Pancreas (tissue), 10 donors: ENCODE measurements at regions of chr1 and their contacts with region 1.

Region 1: GRCh38 chr1:26233903-26234643 is at the start of gene CEP85:
- DNase-seq: peak; percentile 97 to 100 (median 99)
- ATAC-seq: peak; percentile 93 to 99 (median 98)
- H3K4me3 ChIP-seq: peak within 1 kb of the TSS; percentile 50 to 82 (median 62)
- H3K27ac ChIP-seq: peak within 1 kb of the TSS; percentile 75 to 88 (median 81)
- H3K4me1 ChIP-seq: peaks cover 0 to 7% (median 0%) of the 10 kb centered on the region in 3 donors
- H3K27me3 ChIP-seq: no peaks in the 10 kb centered on the region
- CTCF ChIP-seq: peak; percentile 74 to 88 (median 83)
- total RNA-seq, gene CEP85: 2.7 to 6.6 (median 3.7) TPM

Region 2: DNA sequence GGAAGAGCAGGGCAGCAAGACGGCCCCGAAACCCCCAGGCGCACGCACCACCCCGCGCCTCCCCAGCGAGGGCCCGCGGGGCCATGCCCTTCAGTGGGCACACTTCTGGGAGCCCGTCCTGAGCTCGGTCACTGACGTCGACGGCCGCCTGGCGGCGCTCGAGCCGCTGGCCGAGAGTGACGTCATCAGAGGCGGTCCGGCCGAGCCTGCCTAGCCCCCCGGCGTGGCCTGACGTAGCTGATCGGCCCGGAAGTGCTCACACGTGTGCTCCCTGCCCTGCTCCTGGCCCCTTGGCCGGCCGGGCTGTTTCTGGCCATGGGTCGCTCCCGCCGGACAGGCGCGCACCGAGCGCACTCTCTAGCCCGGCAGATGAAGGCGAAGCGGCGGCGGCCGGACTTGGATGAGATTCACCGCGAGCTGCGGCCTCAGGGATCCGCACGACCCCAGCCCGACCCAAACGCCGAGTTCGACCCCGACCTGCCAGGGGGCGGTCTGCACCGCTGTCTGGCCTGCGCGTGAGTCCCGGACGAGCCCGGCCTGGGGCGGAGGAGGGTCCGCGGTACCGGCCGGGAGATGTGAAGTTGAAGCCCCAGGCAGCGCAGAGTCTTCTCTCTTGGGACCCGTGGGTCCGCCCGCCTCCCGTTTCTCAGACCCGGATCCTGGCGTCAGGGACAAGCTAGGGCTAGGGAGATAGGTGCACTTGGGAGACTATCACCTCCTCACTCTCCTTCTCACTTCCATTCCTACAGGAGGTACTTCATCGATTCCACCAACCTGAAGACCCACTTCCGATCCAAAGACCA is 64.2 kb before region 1 on chr1 and contains the start of gene ZNF593:
- intact Hi-C with region 1: loop called in 1 of 3 experiments (anchors 10 kb)
- DNase-seq: peak; percentile 88 to 97 (median 94)
- ATAC-seq: peak; percentile 94 to 97 (median 96)
- H3K4me3 ChIP-seq: peak within 1 kb of the TSS; percentile 63 to 98 (median 94)
- H3K27ac ChIP-seq: peak within 1 kb of the TSS; percentile 67 to 85 (median 74)
- H3K4me1 ChIP-seq: peaks cover 0 to 9% (median 9%) of the 10 kb centered on the region in 3 donors
- H3K27me3 ChIP-seq: no peaks in the 10 kb centered on the region
- CTCF ChIP-seq: peak; percentile 69 to 91 (median 84)
- total RNA-seq, gene ZNF593: 18.4 to 36.7 (median 22.1) TPM

Region 3: GRCh38 chr1:26203642-26204318 is 30.3 kb before region 1 on chr1:
- intact Hi-C with region 1: no loop called
- DNase-seq: no peak
- ATAC-seq: no peak
- H3K4me3 ChIP-seq: no peak overlapping the region
- H3K27ac ChIP-seq: no peak overlapping the region
- H3K4me1 ChIP-seq: no peaks in the 10 kb centered on the region
- H3K27me3 ChIP-seq: no peaks in the 10 kb centered on the region
- CTCF ChIP-seq: no peak

Region 4: DNA sequence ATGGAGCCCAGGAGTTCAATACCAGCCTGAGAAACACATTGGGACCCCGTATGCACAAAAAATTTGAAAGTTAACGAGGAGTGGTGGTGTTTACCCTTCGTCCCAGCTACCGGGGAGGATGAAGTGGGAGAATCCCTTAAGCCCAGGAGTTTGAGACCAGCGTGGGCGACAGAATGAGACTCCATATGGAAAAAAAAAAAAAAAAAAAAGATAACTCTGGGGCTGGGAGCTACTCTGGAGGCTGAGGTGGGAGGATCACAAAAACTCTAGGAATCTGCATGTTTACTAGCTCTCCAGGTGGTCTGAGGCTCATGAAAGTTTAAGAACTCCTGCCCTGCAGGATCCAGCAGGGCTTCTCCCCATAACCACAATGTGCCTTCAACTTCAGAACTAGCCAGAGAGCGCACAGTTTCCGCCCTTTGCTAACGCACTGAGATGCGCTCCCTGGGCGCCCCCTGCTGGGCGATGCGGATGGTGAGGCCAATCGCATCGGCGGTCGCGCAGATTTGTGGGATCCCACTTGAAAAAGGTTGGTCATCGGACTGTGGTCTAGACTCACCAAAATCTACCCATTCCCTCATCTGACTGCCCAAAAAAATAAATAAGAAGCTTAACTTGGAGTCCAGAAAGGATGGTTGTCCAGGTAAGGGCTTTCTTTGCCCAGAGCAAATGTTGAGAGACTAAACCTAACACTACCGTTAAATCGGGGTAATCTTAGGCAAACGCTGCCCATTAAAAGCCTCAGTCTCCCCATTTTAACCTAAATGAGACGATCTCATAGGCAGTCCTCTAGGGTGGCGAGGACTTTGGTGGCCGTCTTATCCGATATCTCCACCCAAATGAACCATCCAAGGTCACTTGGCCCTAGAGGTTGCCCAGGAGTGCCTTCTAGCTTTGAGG is 129.7 kb after region 1 on chr1:
- intact Hi-C with region 1: no loop called
- DNase-seq: peak; percentile 60 to 94 (median 80)
- ATAC-seq: peak; percentile 70 to 89 (median 84)
- H3K4me3 ChIP-seq: no peak overlapping the region
- H3K27ac ChIP-seq: no peak overlapping the region
- H3K4me1 ChIP-seq: peaks cover 0 to 9% (median 0%) of the 10 kb centered on the region in 3 donors
- H3K27me3 ChIP-seq: peaks cover 0 to 18% (median 0%) of the 10 kb centered on the region in 4 donors
- CTCF ChIP-seq: peak; percentile 84 to 96 (median 87)